ENCODE measurements at regions of chr19 and their contacts with region 1.

Region 1: DNA sequence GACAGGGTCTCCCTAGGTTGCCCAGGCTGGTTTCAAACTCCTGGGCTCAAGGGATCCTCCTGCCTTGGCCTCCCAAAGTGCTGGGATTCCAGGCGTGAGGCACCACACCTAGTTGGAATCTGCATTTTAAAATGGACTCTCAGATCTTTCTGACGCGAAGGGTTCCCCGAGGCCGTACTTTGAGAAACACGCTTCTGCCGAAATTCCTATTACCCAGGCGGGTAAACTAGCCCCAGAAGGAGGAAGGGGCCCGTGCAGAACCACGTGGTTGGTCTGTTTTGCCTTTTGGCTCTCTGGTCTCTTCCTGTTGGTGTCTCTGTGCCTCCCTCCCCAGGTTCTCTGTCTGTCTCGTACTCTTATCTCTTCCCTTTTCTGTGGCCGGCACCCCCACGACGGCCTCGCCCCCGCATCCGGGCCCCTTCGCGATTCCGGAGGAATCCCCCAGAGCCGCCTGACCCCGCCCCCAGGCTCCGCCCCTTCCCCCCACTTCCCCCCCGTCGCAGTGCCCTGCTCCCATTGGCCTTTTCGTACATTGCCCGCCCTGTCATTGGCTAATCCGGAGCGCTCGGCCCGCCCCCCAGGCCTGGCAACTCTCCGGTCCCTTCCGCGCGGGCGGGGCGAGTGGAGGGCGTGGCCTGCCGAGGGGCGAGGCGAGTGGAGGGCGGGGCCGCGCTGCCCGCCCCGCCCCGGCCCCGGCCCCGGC is at the start of gene TNFAIP8L1:
- DNase-seq: peak; percentile 98
- ATAC-seq: peak; percentile 71
- H3K4me3 ChIP-seq: peak within 1 kb of the TSS; percentile 90
- H3K27ac ChIP-seq: peak within 1 kb of the TSS; percentile 17; the same call in 1 of the 2 replicates
- H3K4me1 ChIP-seq: peaks cover 34% of the 10 kb centered on the region
- H3K27me3 ChIP-seq: no peaks in the 10 kb centered on the region
- CTCF ChIP-seq: no peak
- total RNA-seq, gene TNFAIP8L1: 8.3 and 12.0 TPM in 2 replicates

Region 2: DNA sequence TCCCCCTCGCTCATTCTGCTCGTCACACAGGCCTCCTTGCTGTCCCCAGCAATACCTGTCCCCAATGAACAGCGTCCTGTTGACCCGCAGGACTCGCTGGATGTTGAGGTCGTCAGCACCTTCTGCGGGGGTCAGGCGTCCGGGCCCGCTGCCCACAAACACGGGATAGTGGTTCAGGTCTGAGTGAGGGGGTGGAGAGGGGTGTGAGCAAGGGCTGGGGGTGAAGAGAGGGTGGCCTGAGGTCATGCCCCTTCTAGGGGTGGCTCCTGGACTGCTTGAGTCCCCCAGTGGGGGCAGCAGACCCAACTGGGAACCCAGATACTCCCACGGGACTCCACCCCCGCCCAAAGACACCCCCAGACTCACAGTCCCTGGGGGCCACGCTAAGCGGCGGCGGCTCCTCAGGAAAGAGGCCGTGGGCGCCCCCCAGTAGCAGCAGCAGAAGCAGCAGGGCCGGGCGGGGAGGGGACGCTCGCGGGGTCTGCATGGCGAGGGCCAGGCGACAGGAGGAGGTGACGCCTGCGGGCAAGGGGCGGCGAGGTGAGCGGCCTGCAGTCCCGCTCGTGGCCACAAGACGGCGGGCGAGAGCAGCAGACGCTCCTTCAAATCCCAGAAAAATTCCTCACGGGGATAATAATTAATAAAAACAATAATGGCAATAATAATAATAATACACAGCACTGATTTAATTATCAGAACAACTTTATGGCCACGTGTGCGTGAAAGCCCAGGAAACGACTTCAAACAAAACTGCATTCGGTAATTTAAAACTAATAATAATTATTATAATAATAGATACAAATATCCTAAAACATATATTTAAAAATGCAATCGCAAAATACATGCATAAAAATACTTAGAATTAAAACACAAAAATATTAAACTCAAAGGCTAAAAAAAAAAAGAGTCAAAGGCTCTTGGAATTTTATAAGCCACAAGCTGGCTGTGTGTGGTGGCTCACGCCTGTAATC is 80.7 kb before region 1 on chr19:
- CTCF ChIA-PET with region 1: interaction called, 3 read pairs
- POLR2A ChIA-PET with region 1: no interaction called
- intact Hi-C with region 1: loop called (anchors 1 kb)
- DNase-seq: peak; percentile 62
- ATAC-seq: no peak
- H3K4me3 ChIP-seq: no peak overlapping the region
- H3K27ac ChIP-seq: no peak overlapping the region
- H3K4me1 ChIP-seq: 0 out of 2 replicates have a peak, but pooled peaks cover 5% of the 10 kb centered on the region
- H3K27me3 ChIP-seq: no peaks in the 10 kb centered on the region
- CTCF ChIP-seq: peak; percentile 88

Region 3: DNA sequence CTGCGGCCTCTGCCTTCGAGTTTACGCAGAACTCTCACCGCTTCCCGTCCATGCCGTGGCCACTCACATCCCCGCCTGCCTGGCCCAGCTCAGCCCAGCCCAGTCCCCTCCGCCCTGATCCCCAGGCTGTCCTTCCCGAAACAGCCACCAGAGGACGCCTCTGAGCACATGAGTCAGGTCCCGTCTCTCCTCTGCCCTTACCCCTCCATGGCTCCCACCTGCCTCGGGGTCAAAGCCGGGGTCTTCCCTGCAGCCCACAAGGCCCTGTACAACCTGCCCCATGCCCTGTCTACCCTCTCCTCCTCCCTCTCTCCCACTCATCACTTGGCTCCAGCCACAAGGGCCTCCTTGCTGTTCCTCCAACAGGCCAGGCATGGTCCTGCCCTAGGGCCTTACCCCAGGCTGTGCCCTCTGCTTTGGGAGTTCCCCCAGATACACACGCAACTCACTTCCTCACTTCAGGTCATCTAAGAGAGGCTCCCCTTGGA is 71.4 kb before region 1 on chr19:
- CTCF ChIA-PET with region 1: interaction called, 15 read pairs
- POLR2A ChIA-PET with region 1: no interaction called
- intact Hi-C with region 1: no loop called
- DNase-seq: peak; percentile 83
- ATAC-seq: peak; percentile 94
- H3K4me3 ChIP-seq: no peak overlapping the region
- H3K27ac ChIP-seq: no peak overlapping the region
- H3K4me1 ChIP-seq: 0 out of 2 replicates have a peak, but pooled peaks cover 4% of the 10 kb centered on the region
- H3K27me3 ChIP-seq: no peaks in the 10 kb centered on the region
- CTCF ChIP-seq: peak; percentile 97

Region 4: GRCh38 chr19:4619668-4620313 is 19.2 kb before region 1 on chr19:
- CTCF ChIA-PET with region 1: no interaction called
- POLR2A ChIA-PET with region 1: no interaction called
- intact Hi-C with region 1: no loop called
- DNase-seq: no peak
- ATAC-seq: no peak
- H3K4me3 ChIP-seq: no peak overlapping the region
- H3K27ac ChIP-seq: no peak overlapping the region
- H3K4me1 ChIP-seq: no peaks in the 10 kb centered on the region
- H3K27me3 ChIP-seq: peaks cover 23% of the 10 kb centered on the region
- CTCF ChIP-seq: no peak; the same call in 1 of the 2 replicates

Region 5: GRCh38 chr19:4654437-4655361 is 15.7 kb after region 1 on chr19:
- CTCF ChIA-PET with region 1: interaction called, 11 read pairs
- POLR2A ChIA-PET with region 1: interaction called, 9 read pairs
- intact Hi-C with region 1: no loop called
- DNase-seq: no peak
- ATAC-seq: no peak
- H3K4me3 ChIP-seq: no peak overlapping the region
- H3K27ac ChIP-seq: no peak overlapping the region
- H3K4me1 ChIP-seq: no peaks in the 10 kb centered on the region
- H3K27me3 ChIP-seq: no peaks in the 10 kb centered on the region
- CTCF ChIP-seq: no peak

Measured in PC-3 (cell line).